ENCODE measurements at regions of chr21 and their contacts with region 1.

Region 1: DNA sequence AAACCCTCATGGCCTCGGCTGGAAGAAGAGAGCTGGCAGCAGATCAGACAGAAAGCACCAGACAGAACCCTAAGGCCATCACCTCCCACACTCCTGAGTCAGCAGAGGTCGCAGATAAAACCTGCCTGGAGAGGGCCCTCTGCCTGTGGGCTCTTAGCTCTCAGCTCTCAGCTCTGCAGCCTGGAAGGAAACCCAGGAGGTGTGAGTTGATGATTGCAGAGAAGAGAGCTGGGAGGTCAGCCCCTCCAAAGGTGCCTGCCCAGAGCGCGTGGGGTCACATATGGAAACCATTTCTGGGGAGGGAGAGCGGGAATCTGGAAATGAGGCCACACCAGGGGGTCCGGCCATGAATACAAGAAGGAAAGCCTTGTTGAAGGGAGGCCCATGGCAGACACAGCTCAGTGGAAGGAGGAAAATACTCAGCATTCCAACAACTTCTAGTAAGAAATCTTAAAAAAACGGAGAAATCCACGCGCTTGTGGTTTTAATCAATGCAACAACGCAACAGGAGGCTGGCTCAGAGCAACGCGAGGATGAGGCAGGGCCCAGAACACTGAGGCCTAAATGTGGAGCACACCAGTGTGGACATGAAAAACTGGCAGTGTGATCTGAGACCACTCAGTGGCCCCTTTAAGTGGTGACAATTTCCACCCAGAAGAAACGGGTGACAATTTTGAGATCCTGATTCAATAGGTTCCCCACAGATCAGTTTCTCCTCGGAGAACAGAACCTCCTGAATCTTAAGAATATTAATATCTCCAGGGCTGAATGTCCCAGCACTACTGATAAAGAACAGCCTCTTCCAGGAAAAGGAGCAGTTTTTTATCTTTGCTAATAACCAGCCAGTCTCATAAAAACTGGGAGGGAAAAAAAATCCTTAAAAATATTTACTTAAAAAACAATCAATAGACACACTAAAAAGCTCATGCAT is 45.7 kb downstream of the PSMG1 start:
- DNase-seq: no peak
- ATAC-seq: no peak
- H3K4me3 Mint-ChIP-seq: no peak overlapping the region
- H3K27ac Mint-ChIP-seq: no peak overlapping the region
- H3K4me1 Mint-ChIP-seq: no peaks in the 10 kb centered on the region
- H3K27me3 Mint-ChIP-seq: peaks cover 3% of the 10 kb centered on the region
- CTCF ChIP-seq: no peak

Region 2: GRCh38 chr21:37965088-37965805 is 1172.3 kb before region 1 on chr21:
- CTCF ChIA-PET with region 1: no interaction called
- POLR2A ChIA-PET with region 1: no interaction called
- intact Hi-C with region 1: no loop called
- DNase-seq: no peak
- ATAC-seq: no peak
- H3K4me3 Mint-ChIP-seq: no peak overlapping the region
- H3K27ac Mint-ChIP-seq: no peak overlapping the region
- H3K4me1 Mint-ChIP-seq: no peaks in the 10 kb centered on the region
- H3K27me3 Mint-ChIP-seq: peaks cover 4% of the 10 kb centered on the region
- CTCF ChIP-seq: no peak

Region 3: GRCh38 chr21:38505654-38506515 is 631.6 kb before region 1 on chr21:
- CTCF ChIA-PET with region 1: no interaction called
- POLR2A ChIA-PET with region 1: no interaction called
- intact Hi-C with region 1: loop called (anchors 1 kb)
- DNase-seq: no peak
- ATAC-seq: no peak
- H3K4me3 Mint-ChIP-seq: no peak overlapping the region
- H3K27ac Mint-ChIP-seq: no peak overlapping the region
- H3K4me1 Mint-ChIP-seq: no peaks in the 10 kb centered on the region
- H3K27me3 Mint-ChIP-seq: peaks cover 14% of the 10 kb centered on the region
- CTCF ChIP-seq: no peak

Region 4: GRCh38 chr21:38669176-38669575 is 468.3 kb before region 1 on chr21:
- CTCF ChIA-PET with region 1: interaction called, 4 read pairs
- POLR2A ChIA-PET with region 1: no interaction called
- intact Hi-C with region 1: loop called (anchors 1 kb)
- DNase-seq: no peak
- ATAC-seq: no peak
- H3K4me3 Mint-ChIP-seq: no peak overlapping the region
- H3K27ac Mint-ChIP-seq: no peak overlapping the region
- H3K4me1 Mint-ChIP-seq: no peaks in the 10 kb centered on the region
- H3K27me3 Mint-ChIP-seq: peaks cover 6% of the 10 kb centered on the region
- CTCF ChIP-seq: no peak

Region 5: GRCh38 chr21:40018871-40019475 is 881.5 kb after region 1 on chr21:
- CTCF ChIA-PET with region 1: no interaction called
- POLR2A ChIA-PET with region 1: no interaction called
- intact Hi-C with region 1: no loop called
- DNase-seq: no peak
- ATAC-seq: no peak
- H3K4me3 Mint-ChIP-seq: no peak overlapping the region
- H3K27ac Mint-ChIP-seq: no peak overlapping the region
- H3K4me1 Mint-ChIP-seq: no peaks in the 10 kb centered on the region
- H3K27me3 Mint-ChIP-seq: no peaks in the 10 kb centered on the region
- CTCF ChIP-seq: no peak